Caco-2 (cell line): ENCODE measurements at regions of chr21 and their contacts with region 1.

Region 1: GRCh38 chr21:33968080-33968994 is 52.7 kb upstream of the ATP5PO start:
- DNase-seq: peak; percentile 46 to 60
- H3K4me3 ChIP-seq: no peak overlapping the region
- H3K4me3 Mint-ChIP-seq: peak overlapping the region; percentile 45
- H3K27ac Mint-ChIP-seq: peak overlapping the region; percentile 89
- H3K4me1 ChIP-seq: peaks cover 65% of the 10 kb centered on the region
- H3K4me1 Mint-ChIP-seq: peaks cover 53% of the 10 kb centered on the region
- H3K27me3 ChIP-seq: no peaks in the 10 kb centered on the region
- H3K27me3 Mint-ChIP-seq: no peaks in the 10 kb centered on the region
- CTCF ChIP-seq: no peak

Region 2: DNA sequence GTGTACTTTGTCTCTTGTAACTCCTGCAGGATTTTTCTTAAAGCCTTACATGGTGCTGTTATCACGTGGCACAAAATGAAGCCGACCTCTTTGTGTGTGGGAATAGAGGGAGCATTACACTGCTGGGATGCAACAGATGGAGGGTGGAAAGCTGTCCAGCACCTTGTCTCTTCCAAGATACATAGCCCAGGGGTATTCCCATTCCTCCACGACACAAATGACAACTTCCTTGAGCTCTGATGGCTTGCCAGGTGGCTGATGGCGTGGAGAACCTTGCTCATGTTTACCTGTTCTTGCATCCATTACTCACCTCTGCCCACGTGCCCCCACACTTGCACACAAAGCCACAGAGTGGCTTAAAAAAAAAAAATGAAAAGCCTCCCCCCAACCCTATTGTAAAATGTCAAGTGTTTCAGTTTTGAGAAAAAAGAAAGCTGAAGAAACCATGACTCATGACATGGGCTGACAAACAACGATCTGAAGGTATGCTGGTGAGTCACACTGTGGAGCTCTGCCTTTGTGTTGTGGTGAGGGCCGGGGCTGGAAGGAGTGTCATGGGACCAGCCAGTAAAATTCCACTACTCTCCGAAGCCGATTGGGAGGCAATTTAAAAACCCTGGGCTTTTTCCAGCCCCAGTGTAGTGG is 20.8 kb before region 1 on chr21:
- CTCF ChIA-PET with region 1: interaction called, 7 read pairs
- POLR2A ChIA-PET with region 1: interaction called, 31 read pairs
- intact Hi-C with region 1: loop called (anchors 1 kb)
- DNase-seq: peak; percentile 87 to 92
- H3K4me3 ChIP-seq: peak overlapping the region; percentile 29
- H3K4me3 Mint-ChIP-seq: peak overlapping the region; percentile 67
- H3K27ac Mint-ChIP-seq: peak overlapping the region; percentile 97
- H3K4me1 ChIP-seq: peaks cover 29% of the 10 kb centered on the region
- H3K4me1 Mint-ChIP-seq: peaks cover 27% of the 10 kb centered on the region
- H3K27me3 ChIP-seq: no peaks in the 10 kb centered on the region
- H3K27me3 Mint-ChIP-seq: no peaks in the 10 kb centered on the region
- CTCF ChIP-seq: no peak

Region 3: GRCh38 chr21:34020005-34020847 is 51.9 kb after region 1 on chr21:
- CTCF ChIA-PET with region 1: no interaction called
- POLR2A ChIA-PET with region 1: no interaction called
- intact Hi-C with region 1: loop called (anchors 5 kb)
- DNase-seq: no peak
- H3K4me3 ChIP-seq: no peak overlapping the region
- H3K4me3 Mint-ChIP-seq: no peak overlapping the region
- H3K27ac Mint-ChIP-seq: no peak overlapping the region
- H3K4me1 ChIP-seq: peaks cover 43% of the 10 kb centered on the region
- H3K4me1 Mint-ChIP-seq: peaks cover 5% of the 10 kb centered on the region
- H3K27me3 ChIP-seq: no peaks in the 10 kb centered on the region
- H3K27me3 Mint-ChIP-seq: no peaks in the 10 kb centered on the region
- CTCF ChIP-seq: no peak

Region 4: DNA sequence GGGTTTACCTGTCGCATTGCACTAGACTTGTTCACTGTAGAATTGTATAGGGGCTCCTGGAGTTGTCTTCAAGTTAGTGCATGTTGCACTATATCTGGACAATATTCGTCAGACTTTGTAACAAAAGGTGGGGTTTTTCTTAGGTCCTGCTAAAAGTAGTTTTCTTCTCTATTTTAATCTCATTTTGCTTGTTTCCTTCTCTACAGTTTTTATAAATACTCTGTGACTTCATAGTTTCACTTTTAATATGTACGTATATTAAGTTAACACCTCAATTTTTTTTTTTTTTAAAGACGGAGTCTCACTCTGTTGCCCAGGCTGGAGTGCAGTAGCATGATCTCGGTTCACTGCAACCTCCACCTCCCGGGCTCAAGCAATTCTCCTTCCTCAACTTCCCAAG is 78.6 kb after region 1 on chr21:
- CTCF ChIA-PET with region 1: no interaction called
- POLR2A ChIA-PET with region 1: no interaction called
- intact Hi-C with region 1: no loop called
- DNase-seq: no peak
- H3K4me3 ChIP-seq: no peak overlapping the region
- H3K4me3 Mint-ChIP-seq: no peak overlapping the region
- H3K27ac Mint-ChIP-seq: no peak overlapping the region
- H3K4me1 ChIP-seq: no peaks in the 10 kb centered on the region
- H3K4me1 Mint-ChIP-seq: no peaks in the 10 kb centered on the region
- H3K27me3 ChIP-seq: no peaks in the 10 kb centered on the region
- H3K27me3 Mint-ChIP-seq: no peaks in the 10 kb centered on the region
- CTCF ChIP-seq: no peak